ENCODE measurements at regions of chr12 and their contacts with region 1.

Region 1: GRCh38 chr12:50174971-50175715 is 8.0 kb upstream of the CERS5 start:
- DNase-seq: peak in 3 of 9 experiments; percentile 25 to 79 (median 73)
- ATAC-seq: peak; percentile 38
- H3K4me3 ChIP-seq: no peak overlapping the region
- H3K4me3 Mint-ChIP-seq: no peak overlapping the region
- H3K27ac ChIP-seq: no peak overlapping the region
- H3K27ac Mint-ChIP-seq: no peak overlapping the region
- H3K4me1 ChIP-seq: no peaks in the 10 kb centered on the region
- H3K4me1 Mint-ChIP-seq: no peaks in the 10 kb centered on the region
- H3K27me3 ChIP-seq: no peaks in the 10 kb centered on the region
- H3K27me3 Mint-ChIP-seq: no peaks in the 10 kb centered on the region
- CTCF ChIP-seq: peak; percentile 93

Region 2: DNA sequence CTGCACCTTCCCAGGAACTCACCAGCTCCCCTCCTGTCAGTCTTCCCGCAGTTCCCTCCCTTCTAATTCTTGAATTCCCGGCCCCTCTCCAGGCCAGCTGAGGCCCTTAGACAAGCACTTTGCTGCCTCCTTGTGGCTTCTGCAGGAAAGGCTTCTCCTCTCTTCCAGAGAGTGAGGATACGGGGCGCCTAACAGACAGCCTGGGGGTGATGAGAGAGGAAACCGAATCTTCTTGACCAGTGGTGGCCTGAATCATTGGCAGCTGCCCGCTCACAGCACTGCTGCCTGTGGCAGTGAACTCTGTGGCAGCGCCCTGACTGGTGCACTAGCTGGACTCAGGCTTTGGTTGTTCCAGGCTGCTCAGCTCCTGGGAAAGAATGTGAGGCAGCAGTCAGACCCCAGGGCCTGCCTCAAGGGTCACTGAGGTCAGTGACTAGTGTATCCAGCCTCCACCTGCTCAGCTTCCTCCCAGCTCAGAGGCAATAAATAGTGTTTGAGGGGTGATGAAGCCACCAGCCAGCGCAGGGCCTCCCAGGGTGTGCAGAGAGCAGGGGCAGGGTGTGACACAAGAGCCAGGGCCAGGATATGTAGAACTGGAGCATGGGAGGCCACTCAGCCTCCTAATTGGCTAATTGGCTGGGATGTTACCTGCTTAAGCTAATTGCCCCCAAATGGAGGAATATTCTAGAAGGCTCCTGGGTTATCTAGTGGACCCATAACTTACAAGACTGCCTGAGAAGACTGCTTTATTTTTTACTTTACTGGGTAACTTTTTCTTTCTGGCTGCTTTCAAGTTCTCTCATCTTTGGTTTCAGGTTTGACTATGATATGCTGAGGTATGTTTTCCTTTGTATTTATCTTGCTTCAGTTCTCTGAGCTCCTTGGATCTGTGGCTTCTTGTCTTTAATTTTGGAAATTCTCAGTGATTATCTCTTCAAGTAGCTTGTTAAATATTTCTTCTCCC is 594.3 kb before region 1 on chr12:
- CTCF ChIA-PET with region 1: no interaction called
- POLR2A ChIA-PET with region 1: no interaction called
- intact Hi-C with region 1: no loop called
- DNase-seq: peak in 8 of 9 experiments; percentile 43 to 69 (median 61)
- ATAC-seq: peak; percentile 86
- H3K4me3 ChIP-seq: no peak overlapping the region
- H3K4me3 Mint-ChIP-seq: no peak overlapping the region
- H3K27ac ChIP-seq: no peak overlapping the region
- H3K27ac Mint-ChIP-seq: no peak overlapping the region
- H3K4me1 ChIP-seq: no peaks in the 10 kb centered on the region
- H3K4me1 Mint-ChIP-seq: peaks cover 11% of the 10 kb centered on the region
- H3K27me3 ChIP-seq: no peaks in the 10 kb centered on the region
- H3K27me3 Mint-ChIP-seq: no peaks in the 10 kb centered on the region
- CTCF ChIP-seq: peak; percentile 69

Region 3: DNA sequence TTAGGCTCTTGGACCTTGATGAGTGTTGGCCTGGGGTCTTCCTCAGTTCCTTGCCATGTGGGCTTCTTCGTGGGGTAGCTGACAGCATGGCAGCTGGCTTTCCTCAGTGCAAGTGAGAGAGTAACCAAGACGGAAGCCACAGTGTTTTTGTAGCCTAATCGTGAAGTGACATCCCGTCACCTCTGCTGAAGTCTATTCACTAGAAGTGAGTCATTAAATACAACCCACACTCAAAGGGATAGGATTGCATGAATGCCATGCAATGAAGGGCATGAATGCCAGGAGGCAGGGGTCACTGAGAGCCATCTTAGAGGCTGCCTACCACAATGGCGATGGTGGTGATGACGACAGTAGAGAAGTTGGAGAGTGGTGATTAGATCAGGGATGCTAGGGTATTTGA is 131.3 kb before region 1 on chr12:
- CTCF ChIA-PET with region 1: interaction called, 4 read pairs
- POLR2A ChIA-PET with region 1: no interaction called
- intact Hi-C with region 1: loop called in 1 of 2 experiments (anchors 1 kb)
- DNase-seq: no peak
- ATAC-seq: no peak
- H3K4me3 ChIP-seq: no peak overlapping the region
- H3K4me3 Mint-ChIP-seq: no peak overlapping the region
- H3K27ac ChIP-seq: no peak overlapping the region
- H3K27ac Mint-ChIP-seq: no peak overlapping the region
- H3K4me1 ChIP-seq: no peaks in the 10 kb centered on the region
- H3K4me1 Mint-ChIP-seq: no peaks in the 10 kb centered on the region
- H3K27me3 ChIP-seq: peaks cover 0 to under 1% of the 10 kb centered on the region in 2 experiments
- H3K27me3 Mint-ChIP-seq: peaks cover 14% of the 10 kb centered on the region
- CTCF ChIP-seq: no peak

Region 4: DNA sequence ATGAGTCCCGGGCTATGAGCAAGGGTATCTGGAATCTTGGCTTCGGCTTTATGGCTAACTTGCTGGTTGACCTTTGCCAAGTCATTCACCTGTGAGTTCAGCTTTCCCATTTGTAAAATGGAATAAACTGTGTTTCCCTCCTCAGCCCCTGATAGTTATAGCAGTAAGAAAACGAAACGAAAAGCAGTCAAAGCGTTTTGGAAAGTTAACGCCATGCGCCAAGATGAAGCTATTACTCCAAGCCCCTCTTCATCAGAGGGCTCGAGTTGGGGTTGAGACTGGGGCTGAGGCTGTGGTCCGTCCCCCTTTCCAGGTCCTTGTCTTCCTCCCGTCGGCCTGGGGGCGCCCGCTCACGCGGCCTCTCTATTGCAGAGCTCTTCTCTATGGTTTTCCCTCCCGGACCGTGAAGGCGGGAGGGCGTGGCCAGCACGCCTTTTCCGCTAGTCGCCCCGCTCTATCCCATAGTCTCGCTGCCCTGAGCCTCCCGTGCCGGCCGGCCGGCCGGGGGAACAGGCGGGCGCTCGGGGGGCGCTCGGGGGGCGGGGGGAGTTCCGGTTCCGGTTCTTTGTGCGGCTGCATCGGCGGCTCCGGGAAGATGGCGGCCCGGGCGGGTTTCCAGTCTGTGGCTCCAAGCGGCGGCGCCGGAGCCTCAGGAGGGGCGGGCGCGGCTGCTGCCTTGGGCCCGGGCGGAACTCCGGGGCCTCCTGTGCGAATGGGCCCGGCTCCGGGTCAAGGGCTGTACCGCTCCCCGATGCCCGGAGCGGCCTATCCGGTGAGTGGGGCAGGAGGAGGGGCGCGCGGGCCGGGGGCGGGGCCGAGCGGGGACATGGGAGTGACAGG is 90.1 kb before region 1 on chr12 and contains the start of gene SMARCD1:
- CTCF ChIA-PET with region 1: interaction called, 176 read pairs
- POLR2A ChIA-PET with region 1: interaction called, 4 read pairs
- intact Hi-C with region 1: loop called (anchors 1 kb)
- DNase-seq: peak; percentile 66 to 94 (median 86)
- ATAC-seq: peak; percentile 81
- H3K4me3 ChIP-seq: peak within 1 kb of the TSS; percentile 87
- H3K4me3 Mint-ChIP-seq: peak within 1 kb of the TSS; percentile 94
- H3K27ac ChIP-seq: peak within 1 kb of the TSS; percentile 90
- H3K27ac Mint-ChIP-seq: peak within 1 kb of the TSS; percentile 98
- H3K4me1 ChIP-seq: peaks cover 10% of the 10 kb centered on the region
- H3K4me1 Mint-ChIP-seq: peaks cover 43% of the 10 kb centered on the region
- H3K27me3 ChIP-seq: no peaks in the 10 kb centered on the region
- H3K27me3 Mint-ChIP-seq: no peaks in the 10 kb centered on the region
- CTCF ChIP-seq: peak; percentile 12
- total RNA-seq, gene SMARCD1: 90.2 to 92.1 TPM

Region 5: DNA sequence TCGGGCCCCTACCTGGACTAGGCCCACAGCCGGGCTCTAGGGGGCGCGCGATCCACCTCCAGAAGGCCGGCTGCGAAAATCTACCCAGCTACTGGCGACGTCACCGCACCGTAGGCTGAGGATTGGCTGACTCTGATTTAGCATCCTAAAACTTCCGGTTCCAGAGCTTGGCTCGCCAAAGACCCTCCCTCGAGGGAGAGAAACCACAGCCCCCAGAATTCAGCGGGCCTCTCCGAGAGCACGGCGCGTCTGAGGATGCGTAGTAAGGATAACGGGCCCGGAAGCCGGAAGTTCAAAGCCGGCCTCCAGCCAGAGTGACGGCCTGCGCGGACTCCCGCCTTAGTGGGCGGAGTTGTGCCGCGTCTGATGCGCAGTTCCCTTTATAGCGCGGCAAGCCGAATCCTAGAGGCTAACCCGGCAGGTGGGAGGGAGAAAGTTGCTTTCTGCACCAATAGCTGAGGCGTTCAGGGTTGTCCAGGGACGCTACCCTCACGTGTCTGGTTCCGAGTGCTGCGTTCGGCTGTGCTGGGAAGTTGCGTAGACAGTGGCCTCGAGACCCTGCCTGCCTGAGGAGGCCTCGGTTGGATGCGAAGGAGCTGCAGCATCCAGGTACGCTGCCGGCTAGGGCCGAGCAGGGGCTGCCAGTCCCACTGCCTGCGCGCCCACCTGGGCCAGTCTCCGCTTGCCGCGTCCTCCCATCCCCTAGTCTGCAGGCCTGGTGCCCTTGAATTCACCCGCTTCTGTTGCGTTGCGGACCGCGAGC is 63.3 kb before region 1 on chr12 and contains the start of gene COX14:
- CTCF ChIA-PET with region 1: interaction called, 56 read pairs
- POLR2A ChIA-PET with region 1: interaction called, 10 read pairs
- intact Hi-C with region 1: loop called (anchors 1 kb)
- DNase-seq: peak; percentile 98 to 100 (median 99)
- ATAC-seq: peak; percentile 82
- H3K4me3 ChIP-seq: peak within 1 kb of the TSS; percentile 88 to 98
- H3K4me3 Mint-ChIP-seq: peak within 1 kb of the TSS; percentile 99
- H3K27ac ChIP-seq: peak within 1 kb of the TSS; percentile 97 to 98
- H3K27ac Mint-ChIP-seq: peak within 1 kb of the TSS; percentile 95
- H3K4me1 ChIP-seq: peaks cover 36% of the 10 kb centered on the region
- H3K4me1 Mint-ChIP-seq: peaks cover 35% of the 10 kb centered on the region
- H3K27me3 ChIP-seq: no peaks in the 10 kb centered on the region
- H3K27me3 Mint-ChIP-seq: no peaks in the 10 kb centered on the region
- CTCF ChIP-seq: peak; percentile 97
- total RNA-seq, gene COX14: 42.2 to 43.3 TPM

Region 6: GRCh38 chr12:50132505-50133135 is 42.5 kb before region 1 on chr12:
- CTCF ChIA-PET with region 1: interaction called, 30 read pairs
- POLR2A ChIA-PET with region 1: no interaction called
- intact Hi-C with region 1: loop called (anchors 1 kb)
- DNase-seq: peak in 2 of 9 experiments; percentile 57 to 58
- ATAC-seq: no peak
- H3K4me3 ChIP-seq: no peak overlapping the region
- H3K4me3 Mint-ChIP-seq: no peak overlapping the region
- H3K27ac ChIP-seq: no peak overlapping the region
- H3K27ac Mint-ChIP-seq: peak overlapping the region; percentile 68
- H3K4me1 ChIP-seq: no peaks in the 10 kb centered on the region
- H3K4me1 Mint-ChIP-seq: peaks cover 10% of the 10 kb centered on the region
- H3K27me3 ChIP-seq: no peaks in the 10 kb centered on the region
- H3K27me3 Mint-ChIP-seq: no peaks in the 10 kb centered on the region
- CTCF ChIP-seq: peak; percentile 52

Measured in CD8-positive, alpha-beta T cell (primary cell).